ENCODE measurements at regions of chr2 and their contacts with region 1.

Region 1: DNA sequence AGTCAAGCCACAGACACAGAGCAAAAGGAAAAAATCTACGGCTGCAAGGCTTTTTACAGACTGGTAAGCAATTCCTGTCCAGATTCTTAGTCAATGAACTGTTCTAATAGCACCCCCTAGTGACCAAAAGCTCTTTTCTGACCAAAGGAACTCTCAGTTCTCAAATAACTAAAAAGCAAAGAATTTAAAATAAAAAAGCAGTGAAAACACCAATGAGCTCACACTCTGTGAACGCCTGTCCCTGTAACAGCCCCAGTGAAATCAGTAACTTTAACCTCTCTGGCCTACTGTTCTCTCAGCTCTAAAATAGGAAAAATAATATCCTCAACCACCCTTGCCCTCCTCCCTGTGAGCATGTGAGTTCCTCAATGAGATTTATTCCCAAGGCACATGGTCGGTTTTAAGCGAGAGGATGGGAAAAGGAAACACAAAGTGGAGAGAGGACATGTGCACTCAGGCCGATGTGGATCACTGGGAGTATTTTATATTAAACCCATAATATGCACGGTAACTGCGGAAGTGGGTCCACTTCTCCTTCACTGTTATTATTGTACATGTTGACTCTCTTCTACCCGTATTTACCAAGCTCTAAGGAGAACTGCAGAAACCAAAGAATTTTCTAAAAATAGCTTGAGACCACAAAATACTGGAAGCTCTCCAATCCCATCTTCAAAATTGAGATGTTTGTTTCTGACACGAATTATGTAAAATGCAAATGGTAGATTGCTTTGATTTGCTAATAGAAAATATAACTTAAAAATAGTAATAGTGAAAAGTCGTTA is 128.5 kb downstream of the STK39 start:
- DNase-seq: peak; percentile 71
- ATAC-seq: peak; percentile 79
- H3K4me3 ChIP-seq: no peak overlapping the region
- H3K27ac ChIP-seq: no peak overlapping the region
- H3K4me1 ChIP-seq: no peaks in the 10 kb centered on the region
- H3K27me3 ChIP-seq: no peaks in the 10 kb centered on the region
- CTCF ChIP-seq: peak; percentile 71
- EP300 ChIP-seq: no peak
- POLR2A ChIP-seq: no peak
- RAD21 ChIP-seq: peak; percentile 59

Region 2: GRCh38 chr2:166900700-166901099 is 1218.2 kb before region 1 on chr2:
- CTCF ChIA-PET with region 1: interaction called, 5 read pairs
- POLR2A ChIA-PET with region 1: no interaction called
- in situ Hi-C with region 1: loop called (anchors 25 kb)
- intact Hi-C with region 1: loop called (anchors 2 kb)
- DNase-seq: peak; percentile 67
- ATAC-seq: peak; percentile 99
- H3K4me3 ChIP-seq: no peak overlapping the region
- H3K27ac ChIP-seq: no peak overlapping the region
- H3K4me1 ChIP-seq: no peaks in the 10 kb centered on the region
- H3K27me3 ChIP-seq: no peaks in the 10 kb centered on the region
- CTCF ChIP-seq: peak; percentile 79
- EP300 ChIP-seq: no peak
- POLR2A ChIP-seq: no peak
- RAD21 ChIP-seq: peak; percentile 58; the same call in 1 of the 2 replicates

Region 3: GRCh38 chr2:167292430-167293171 is 826.3 kb before region 1 on chr2:
- CTCF ChIA-PET with region 1: no interaction called
- POLR2A ChIA-PET with region 1: no interaction called
- in situ Hi-C with region 1: no loop called
- intact Hi-C with region 1: loop called (anchors 2 kb)
- DNase-seq: peak; percentile 64
- ATAC-seq: peak; percentile 99
- H3K4me3 ChIP-seq: peak within 1 kb of the TSS; percentile 64 to 76 (median 75)
- H3K27ac ChIP-seq: no peak within 1 kb of the TSS
- H3K4me1 ChIP-seq: peaks cover 13% of the 10 kb centered on the region
- H3K27me3 ChIP-seq: peaks cover 3 to 25% of the 10 kb centered on the region in 2 experiments; a peak in 4 of 5 replicates
- CTCF ChIP-seq: peak; percentile 59
- EP300 ChIP-seq: no peak
- POLR2A ChIP-seq: no peak
- RAD21 ChIP-seq: 0 out of 2 replicates have a peak, but pooled peaks have one; percentile 11

Region 4: DNA sequence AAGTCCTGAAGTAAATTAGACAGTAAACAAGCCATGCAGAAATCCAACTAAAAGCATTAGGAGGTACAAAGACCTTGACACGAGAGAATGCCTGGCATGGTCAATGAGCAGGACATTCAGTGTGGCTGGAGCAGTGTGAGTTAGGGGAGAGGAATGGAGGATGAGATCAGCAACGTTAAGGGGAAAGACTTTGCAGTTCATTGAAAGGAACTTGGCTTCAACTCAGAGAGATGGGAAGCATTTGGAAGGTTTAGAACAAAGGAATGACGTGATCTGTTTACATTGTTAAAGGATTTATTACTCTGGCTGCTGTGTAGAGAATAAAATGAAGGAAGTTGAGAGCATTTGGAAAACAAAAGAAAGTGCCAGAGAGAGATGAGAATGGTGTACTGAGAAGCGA is 609.3 kb before region 1 on chr2:
- CTCF ChIA-PET with region 1: no interaction called
- POLR2A ChIA-PET with region 1: no interaction called
- in situ Hi-C with region 1: no loop called
- intact Hi-C with region 1: loop called (anchors 5 kb)
- DNase-seq: peak; percentile 60
- ATAC-seq: peak; percentile 81
- H3K4me3 ChIP-seq: peak overlapping the region in 1 of 3 experiments; percentile 0; a peak in 1 of 6 replicates
- H3K27ac ChIP-seq: no peak overlapping the region
- H3K4me1 ChIP-seq: peaks cover 27% of the 10 kb centered on the region
- H3K27me3 ChIP-seq: no peaks in the 10 kb centered on the region
- CTCF ChIP-seq: no peak
- EP300 ChIP-seq: no peak
- POLR2A ChIP-seq: no peak
- RAD21 ChIP-seq: no peak

Region 5: GRCh38 chr2:167689444-167689843 is 429.5 kb before region 1 on chr2:
- CTCF ChIA-PET with region 1: interaction called, 3 read pairs
- POLR2A ChIA-PET with region 1: no interaction called
- in situ Hi-C with region 1: no loop called
- intact Hi-C with region 1: loop called (anchors 5 kb)
- DNase-seq: peak; percentile 39
- ATAC-seq: peak; percentile 89
- H3K4me3 ChIP-seq: no peak overlapping the region
- H3K27ac ChIP-seq: no peak overlapping the region
- H3K4me1 ChIP-seq: no peaks in the 10 kb centered on the region
- H3K27me3 ChIP-seq: no peaks in the 10 kb centered on the region
- CTCF ChIP-seq: peak; percentile 53
- EP300 ChIP-seq: no peak
- POLR2A ChIP-seq: no peak
- RAD21 ChIP-seq: no peak

Measured in HepG2 (cell line).